ENCODE measurements at regions of chr14 and their contacts with region 1.

Region 1: GRCh38 chr14:63276492-63277342 is 42.0 kb downstream of the GPHB5 start:
- DNase-seq: peak; percentile 48
- H3K4me3 ChIP-seq: no peak overlapping the region
- H3K27ac ChIP-seq: no peak overlapping the region
- H3K4me1 ChIP-seq: peaks cover 0 to 3% of the 10 kb centered on the region in 2 experiments; a peak in 1 of 4 replicates
- H3K27me3 ChIP-seq: no peaks in the 10 kb centered on the region
- CTCF ChIP-seq: peak; percentile 94
- EP300 ChIP-seq: no peak
- RAD21 ChIP-seq: peak; percentile 91

Region 2: GRCh38 chr14:62162998-62163589 is 1113.6 kb before region 1 on chr14:
- CTCF ChIA-PET with region 1: interaction called, 54 read pairs
- POLR2A ChIA-PET with region 1: no interaction called
- DNase-seq: peak; percentile 40
- H3K4me3 ChIP-seq: no peak overlapping the region; a peak in 1 of 4 replicates
- H3K27ac ChIP-seq: no peak overlapping the region
- H3K4me1 ChIP-seq: peaks cover 0 to 2% of the 10 kb centered on the region in 2 experiments; a peak in 2 of 4 replicates
- H3K27me3 ChIP-seq: peaks cover 19% of the 10 kb centered on the region; the same call in 1 of the 2 replicates
- CTCF ChIP-seq: peak; percentile 89
- EP300 ChIP-seq: no peak
- RAD21 ChIP-seq: peak; percentile 91

Region 3: GRCh38 chr14:62168564-62169155 is 1108.1 kb before region 1 on chr14:
- CTCF ChIA-PET with region 1: interaction called, 54 read pairs
- POLR2A ChIA-PET with region 1: no interaction called
- DNase-seq: no peak
- H3K4me3 ChIP-seq: no peak overlapping the region
- H3K27ac ChIP-seq: no peak overlapping the region
- H3K4me1 ChIP-seq: no peaks in the 10 kb centered on the region; a peak in 1 of 4 replicates
- H3K27me3 ChIP-seq: peaks cover 10% of the 10 kb centered on the region; the same call in 1 of the 2 replicates
- CTCF ChIP-seq: peak; percentile 38
- EP300 ChIP-seq: no peak
- RAD21 ChIP-seq: peak; percentile 20; the same call in 1 of the 2 replicates

Region 4: DNA sequence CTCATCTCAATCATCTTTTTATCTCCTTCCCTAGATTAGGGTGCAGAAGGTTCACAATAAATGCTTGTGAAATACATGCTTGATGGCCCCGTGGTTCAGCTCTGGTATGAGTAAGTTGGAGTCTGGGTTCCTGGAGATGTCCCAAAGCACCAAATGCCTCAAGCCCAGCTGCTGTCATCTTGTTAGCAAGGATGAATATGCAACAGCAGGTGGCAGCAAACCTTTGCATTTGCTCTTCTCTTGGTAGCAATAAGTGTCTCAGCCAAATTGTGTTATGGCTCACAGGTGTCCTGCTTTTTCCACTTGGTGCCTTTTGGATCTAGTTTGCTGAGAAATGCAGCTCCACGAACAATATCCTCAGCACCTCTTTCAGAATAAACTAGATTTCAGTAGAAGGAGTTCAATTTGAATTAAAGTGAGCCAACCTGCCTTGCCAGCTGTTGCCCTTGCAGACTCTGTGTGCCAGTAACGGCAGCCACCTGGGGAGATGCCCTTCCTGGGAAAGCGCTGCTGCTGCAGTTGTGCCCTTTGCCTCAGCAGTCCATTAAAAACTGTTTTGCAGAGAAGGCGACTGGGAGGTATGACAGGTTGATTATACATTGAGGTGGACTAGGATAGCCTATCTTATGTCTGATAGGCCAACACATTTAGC is 1097.2 kb before region 1 on chr14:
- CTCF ChIA-PET with region 1: interaction called, 61 read pairs
- POLR2A ChIA-PET with region 1: no interaction called
- DNase-seq: peak; percentile 22
- H3K4me3 ChIP-seq: no peak overlapping the region
- H3K27ac ChIP-seq: no peak overlapping the region
- H3K4me1 ChIP-seq: peaks cover 0 to 7% of the 10 kb centered on the region in 2 experiments; a peak in 1 of 4 replicates
- H3K27me3 ChIP-seq: no peaks in the 10 kb centered on the region
- CTCF ChIP-seq: peak; percentile 80
- EP300 ChIP-seq: no peak
- RAD21 ChIP-seq: peak; percentile 87

Region 5: DNA sequence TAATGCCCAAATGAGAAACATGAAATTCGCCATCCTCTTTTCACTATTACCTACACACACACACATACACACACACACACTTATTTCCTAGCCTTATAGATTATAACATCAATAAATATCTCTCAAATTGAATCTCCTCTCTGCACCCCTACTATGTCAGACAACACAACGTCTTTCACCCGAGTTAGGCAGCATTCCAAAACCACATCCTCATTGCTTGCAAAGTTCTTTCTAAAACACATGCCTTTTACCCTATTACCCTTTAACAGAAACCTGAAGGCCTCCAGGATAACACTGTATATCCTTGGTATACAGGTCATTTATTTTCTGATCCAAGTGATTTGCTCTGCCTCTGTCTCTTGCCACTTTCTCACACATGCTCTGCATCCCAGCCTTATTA is 287.8 kb before region 1 on chr14:
- CTCF ChIA-PET with region 1: no interaction called
- POLR2A ChIA-PET with region 1: no interaction called
- DNase-seq: no peak
- H3K4me3 ChIP-seq: no peak overlapping the region
- H3K27ac ChIP-seq: no peak overlapping the region
- H3K4me1 ChIP-seq: no peaks in the 10 kb centered on the region
- H3K27me3 ChIP-seq: no peaks in the 10 kb centered on the region
- CTCF ChIP-seq: no peak
- EP300 ChIP-seq: no peak
- RAD21 ChIP-seq: no peak

Region 6: DNA sequence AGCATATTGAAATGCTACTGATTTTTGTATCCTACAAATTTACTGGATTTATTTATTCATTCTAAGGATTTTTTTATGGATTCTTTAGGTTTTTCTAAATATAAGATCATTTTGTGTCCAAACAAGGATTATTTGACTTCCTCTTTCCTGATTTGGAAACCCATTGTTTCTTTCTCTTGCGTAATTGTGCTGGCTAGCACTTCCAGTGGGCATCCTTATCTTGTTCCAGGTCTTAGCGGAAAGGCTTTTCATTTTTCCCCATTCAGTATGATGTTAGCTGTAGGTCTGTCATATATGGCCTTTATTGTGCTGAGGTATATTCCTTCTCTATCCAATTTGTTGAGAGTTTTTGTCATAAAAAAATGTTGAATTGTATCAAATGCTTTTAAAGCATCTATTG is 129.7 kb before region 1 on chr14:
- CTCF ChIA-PET with region 1: no interaction called
- POLR2A ChIA-PET with region 1: no interaction called
- DNase-seq: no peak
- H3K4me3 ChIP-seq: no peak overlapping the region
- H3K27ac ChIP-seq: no peak overlapping the region
- H3K4me1 ChIP-seq: no peaks in the 10 kb centered on the region
- H3K27me3 ChIP-seq: no peaks in the 10 kb centered on the region
- CTCF ChIP-seq: no peak
- EP300 ChIP-seq: no peak
- RAD21 ChIP-seq: no peak

Region 7: GRCh38 chr14:63174760-63175211 is 101.9 kb before region 1 on chr14:
- CTCF ChIA-PET with region 1: interaction called, 35 read pairs
- POLR2A ChIA-PET with region 1: no interaction called
- DNase-seq: peak; percentile 55
- H3K4me3 ChIP-seq: peak overlapping the region in 1 of 2 experiments; percentile 1; a peak in 1 of 4 replicates
- H3K27ac ChIP-seq: peak overlapping the region in 1 of 2 experiments; percentile 69; a peak in 2 of 4 replicates
- H3K4me1 ChIP-seq: peaks cover 0 to 13% of the 10 kb centered on the region in 2 experiments; a peak in 1 of 4 replicates
- H3K27me3 ChIP-seq: no peaks in the 10 kb centered on the region
- CTCF ChIP-seq: peak; percentile 80
- EP300 ChIP-seq: peak in 1 of 2 experiments; percentile 65; a peak in 2 of 4 replicates
- RAD21 ChIP-seq: peak; percentile 67

Region 8: DNA sequence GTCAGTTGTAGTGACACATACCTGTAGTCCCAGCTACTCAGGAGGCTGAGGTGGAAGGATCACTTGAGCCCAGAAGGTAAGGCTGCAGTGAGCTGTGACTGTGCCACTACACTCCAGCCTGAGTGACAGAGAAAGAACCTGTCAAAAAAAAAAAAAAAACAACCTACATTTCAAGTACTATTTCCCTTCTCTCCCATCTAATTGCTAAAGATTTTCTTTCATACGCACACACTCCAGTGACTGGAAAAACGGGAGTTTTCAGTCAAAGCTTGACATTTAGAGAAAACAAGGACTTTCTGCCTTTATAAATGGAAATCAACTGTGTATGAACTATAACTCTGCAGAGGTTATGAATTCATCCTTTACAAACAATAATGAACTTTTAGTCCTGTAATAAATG is 16.1 kb after region 1 on chr14:
- CTCF ChIA-PET with region 1: interaction called, 11 read pairs
- POLR2A ChIA-PET with region 1: no interaction called
- DNase-seq: no peak
- H3K4me3 ChIP-seq: no peak overlapping the region
- H3K27ac ChIP-seq: no peak overlapping the region
- H3K4me1 ChIP-seq: no peaks in the 10 kb centered on the region; a peak in 1 of 4 replicates
- H3K27me3 ChIP-seq: no peaks in the 10 kb centered on the region
- CTCF ChIP-seq: no peak
- EP300 ChIP-seq: no peak
- RAD21 ChIP-seq: no peak

Region 9: DNA sequence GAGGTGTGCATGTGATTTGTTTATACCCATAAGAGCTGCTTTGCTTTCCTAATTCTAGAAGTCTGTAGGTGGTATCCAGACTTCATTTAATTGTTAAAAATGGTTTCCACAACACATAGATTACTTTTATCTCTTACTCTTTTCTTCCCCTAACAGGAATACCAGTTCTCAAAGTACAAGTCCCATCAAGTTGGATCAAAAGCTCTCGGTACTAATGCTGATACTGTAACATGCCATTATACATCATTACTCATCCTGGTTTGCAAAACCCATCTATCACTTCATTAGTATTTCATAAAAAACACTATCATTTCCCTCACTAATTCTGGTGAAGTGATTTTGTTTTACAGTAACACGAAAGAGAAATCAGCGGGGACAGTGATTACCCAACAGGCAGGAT is 172.1 kb after region 1 on chr14:
- CTCF ChIA-PET with region 1: no interaction called
- POLR2A ChIA-PET with region 1: no interaction called
- DNase-seq: no peak
- H3K4me3 ChIP-seq: no peak overlapping the region
- H3K27ac ChIP-seq: no peak overlapping the region
- H3K4me1 ChIP-seq: peaks cover 0 to 9% of the 10 kb centered on the region in 2 experiments; a peak in 2 of 4 replicates
- H3K27me3 ChIP-seq: no peaks in the 10 kb centered on the region
- CTCF ChIP-seq: no peak
- EP300 ChIP-seq: no peak
- RAD21 ChIP-seq: no peak

Region 10: DNA sequence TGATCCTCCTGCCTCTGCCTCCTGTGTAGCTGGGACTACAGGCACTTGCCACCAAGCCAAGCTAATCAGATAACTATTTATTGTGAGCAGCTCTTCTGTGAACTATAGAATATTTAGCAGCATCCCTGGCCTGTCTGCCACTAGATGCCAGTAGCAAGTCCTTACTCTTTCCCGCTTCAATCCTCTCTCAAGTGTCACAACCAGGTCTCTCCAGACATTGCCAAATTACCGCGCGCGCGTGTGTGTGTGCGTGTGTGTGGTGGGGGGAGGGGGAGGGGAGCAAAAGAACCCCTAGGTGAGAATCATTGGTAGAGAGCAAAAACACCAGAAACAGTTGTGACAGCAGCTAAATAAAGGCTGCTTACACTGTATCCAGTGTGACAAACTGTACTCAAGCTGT is 216.5 kb after region 1 on chr14:
- CTCF ChIA-PET with region 1: no interaction called
- POLR2A ChIA-PET with region 1: no interaction called
- DNase-seq: peak; percentile 55
- H3K4me3 ChIP-seq: no peak overlapping the region
- H3K27ac ChIP-seq: peak overlapping the region; percentile 51 to 92
- H3K4me1 ChIP-seq: peaks cover 6 to 19% of the 10 kb centered on the region in 2 experiments
- H3K27me3 ChIP-seq: no peaks in the 10 kb centered on the region
- CTCF ChIP-seq: peak; percentile 39
- EP300 ChIP-seq: no peak
- RAD21 ChIP-seq: peak; percentile 65